ENCODE measurements at regions of chr4 and their contacts with region 1.

Region 1: DNA sequence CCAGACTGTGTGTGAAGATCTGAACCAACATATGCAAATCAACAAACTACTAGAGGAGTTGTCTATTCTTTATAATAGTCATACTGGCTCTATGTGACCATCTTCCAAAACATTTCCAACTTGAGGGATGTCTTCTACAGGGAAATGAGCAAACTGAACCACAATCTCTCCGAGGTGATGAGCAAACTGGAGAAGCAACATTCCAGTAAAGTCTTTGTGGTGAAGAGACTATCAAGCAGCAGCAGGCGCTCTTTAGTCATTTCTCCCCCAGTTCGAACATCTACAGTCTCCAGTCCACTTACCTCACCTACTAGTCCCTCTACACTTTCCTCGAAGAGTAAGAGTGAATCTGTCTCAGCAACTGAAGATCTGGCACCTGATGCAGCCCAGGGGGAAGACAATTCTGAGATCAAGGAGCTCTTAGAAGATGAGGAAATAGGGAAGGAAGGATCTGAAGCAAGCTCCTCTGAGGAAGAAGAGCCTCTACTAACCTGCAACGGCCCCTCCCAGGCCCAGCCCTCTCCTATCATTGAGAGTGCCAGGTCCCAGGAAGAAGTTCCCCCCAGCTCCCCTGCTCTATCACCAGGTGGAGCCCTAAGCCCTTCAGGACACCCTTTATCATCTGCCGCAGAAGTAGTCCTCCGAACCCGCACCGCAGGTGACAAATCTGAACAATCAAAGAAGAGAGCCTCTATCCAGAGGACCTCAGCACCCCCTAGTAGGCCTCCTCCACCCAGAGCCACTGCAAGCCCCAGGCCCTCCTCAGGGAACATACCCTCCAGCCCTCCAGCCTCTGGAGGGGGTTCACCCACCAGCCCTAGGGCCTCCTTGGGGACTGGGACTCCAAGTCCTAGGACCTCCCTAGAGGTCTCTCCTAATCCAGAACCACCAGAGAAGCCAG is 98.1 kb downstream of the HNRNPD start:
- DNase-seq: peak in 3 of 4 experiments; percentile 14 to 49 (median 44)
- ATAC-seq: peak; percentile 97
- H3K4me3 ChIP-seq: no peak overlapping the region
- H3K27ac ChIP-seq: no peak overlapping the region
- H3K4me1 ChIP-seq: no peaks in the 10 kb centered on the region
- H3K27me3 ChIP-seq: peaks cover 13 to 22% of the 10 kb centered on the region in 2 experiments; a peak in 4 of 5 replicates
- CTCF ChIP-seq: peak; percentile 51 to 66 (median 51)
- EP300 ChIP-seq: no peak
- POLR2A ChIP-seq: no peak
- RAD21 ChIP-seq: peak; percentile 58 to 60; a peak in 3 of 4 replicates

Region 2: GRCh38 chr4:81392164-81392563 is 883.5 kb before region 1 on chr4:
- CTCF ChIA-PET with region 1: no interaction called
- POLR2A ChIA-PET with region 1: no interaction called
- in situ Hi-C with region 1: loop called (anchors 10 kb)
- intact Hi-C with region 1: no loop called
- DNase-seq: no peak
- ATAC-seq: no peak
- H3K4me3 ChIP-seq: no peak overlapping the region
- H3K27ac ChIP-seq: no peak overlapping the region
- H3K4me1 ChIP-seq: no peaks in the 10 kb centered on the region
- H3K27me3 ChIP-seq: peaks cover 0 to 7% of the 10 kb centered on the region in 2 experiments; a peak in 2 of 5 replicates
- CTCF ChIP-seq: no peak
- EP300 ChIP-seq: no peak
- POLR2A ChIP-seq: no peak
- RAD21 ChIP-seq: no peak

Region 3: GRCh38 chr4:82360298-82361177 is 84.9 kb after region 1 on chr4:
- CTCF ChIA-PET with region 1: interaction called, 5 read pairs
- POLR2A ChIA-PET with region 1: no interaction called
- in situ Hi-C with region 1: no loop called
- intact Hi-C with region 1: loop called (anchors 2 kb)
- DNase-seq: peak; percentile 21 to 39 (median 28)
- ATAC-seq: peak; percentile 73
- H3K4me3 ChIP-seq: no peak overlapping the region
- H3K27ac ChIP-seq: no peak overlapping the region
- H3K4me1 ChIP-seq: peaks cover 8 to 35% of the 10 kb centered on the region in 2 experiments; a peak in 3 of 5 replicates
- H3K27me3 ChIP-seq: no peaks in the 10 kb centered on the region
- CTCF ChIP-seq: peak in 2 of 3 experiments; percentile 66 to 67; a peak in 5 of 6 replicates
- EP300 ChIP-seq: no peak
- POLR2A ChIP-seq: no peak
- RAD21 ChIP-seq: peak; percentile 35 to 55

Region 4: DNA sequence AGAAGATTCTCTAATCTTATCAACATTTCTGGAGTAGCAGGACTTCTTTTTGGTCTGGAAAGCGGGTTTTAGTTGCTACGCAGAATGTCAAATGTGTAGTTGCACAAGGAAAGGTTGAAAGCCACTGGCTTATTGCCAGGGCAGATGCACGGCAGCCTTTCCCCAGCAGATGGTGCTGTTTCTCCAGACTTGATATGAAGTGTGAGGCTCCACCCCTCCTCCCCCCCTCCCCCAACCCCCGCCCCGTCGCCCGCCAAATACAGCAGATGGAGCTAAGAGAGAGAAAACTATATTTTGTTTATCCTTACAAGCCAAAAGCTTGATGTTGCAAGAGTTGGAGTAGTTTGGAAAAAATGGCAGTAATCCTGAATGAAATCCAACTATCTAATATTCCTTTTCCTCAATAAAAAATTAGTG is 186.7 kb after region 1 on chr4:
- CTCF ChIA-PET with region 1: no interaction called
- POLR2A ChIA-PET with region 1: no interaction called
- in situ Hi-C with region 1: no loop called
- intact Hi-C with region 1: loop called (anchors 10 kb)
- DNase-seq: peak; percentile 89 to 92 (median 90)
- ATAC-seq: peak; percentile 97
- H3K4me3 ChIP-seq: no peak overlapping the region
- H3K27ac ChIP-seq: no peak overlapping the region
- H3K4me1 ChIP-seq: no peaks in the 10 kb centered on the region
- H3K27me3 ChIP-seq: no peaks in the 10 kb centered on the region
- CTCF ChIP-seq: peak; percentile 55 to 80 (median 73)
- EP300 ChIP-seq: no peak
- POLR2A ChIP-seq: no peak
- RAD21 ChIP-seq: peak; percentile 36 to 48; a peak in 3 of 4 replicates

Region 5: GRCh38 chr4:82599336-82599735 is 323.7 kb after region 1 on chr4:
- CTCF ChIA-PET with region 1: no interaction called
- POLR2A ChIA-PET with region 1: no interaction called
- in situ Hi-C with region 1: no loop called
- intact Hi-C with region 1: loop called (anchors 5 kb)
- DNase-seq: peak in 2 of 4 experiments; percentile 20 to 28
- ATAC-seq: peak; percentile 91
- H3K4me3 ChIP-seq: no peak overlapping the region
- H3K27ac ChIP-seq: no peak overlapping the region
- H3K4me1 ChIP-seq: no peaks in the 10 kb centered on the region
- H3K27me3 ChIP-seq: peaks cover 7% of the 10 kb centered on the region in 2 experiments; a peak in 1 of 5 replicates
- CTCF ChIP-seq: peak; percentile 17 to 37 (median 32); a peak in 4 of 6 replicates
- EP300 ChIP-seq: no peak
- POLR2A ChIP-seq: no peak
- RAD21 ChIP-seq: peak in 1 of 2 experiments; percentile 42; a peak in 2 of 4 replicates

Region 6: GRCh38 chr4:82739316-82740179 is 463.9 kb after region 1 on chr4:
- CTCF ChIA-PET with region 1: no interaction called
- POLR2A ChIA-PET with region 1: no interaction called
- in situ Hi-C with region 1: no loop called
- intact Hi-C with region 1: loop called (anchors 5 kb)
- DNase-seq: peak; percentile 71 to 89 (median 86)
- ATAC-seq: peak; percentile 100
- H3K4me3 ChIP-seq: no peak overlapping the region
- H3K27ac ChIP-seq: no peak overlapping the region
- H3K4me1 ChIP-seq: 0 out of 5 replicates have a peak, but pooled peaks cover 0 to 2% of the 10 kb centered on the region in 2 experiments
- H3K27me3 ChIP-seq: peaks cover 4 to 26% of the 10 kb centered on the region in 2 experiments; a peak in 4 of 5 replicates
- CTCF ChIP-seq: peak; percentile 98 to 100 (median 99)
- EP300 ChIP-seq: no peak
- POLR2A ChIP-seq: no peak
- RAD21 ChIP-seq: peak; percentile 75 to 83

Measured in K562 (cell line).